ENCODE measurements at regions of chr4 and their contacts with region 1.

Region 1: GRCh38 chr4:24032371-24032989 is 142.6 kb upstream of the PPARGC1A start:
- DNase-seq: peak in 1 of 2 donors; percentile 14
- ATAC-seq: peak; percentile 68 to 96 (median 95)
- H3K4me3 ChIP-seq: no peak overlapping the region
- H3K27ac ChIP-seq: no peak overlapping the region
- H3K4me1 ChIP-seq: no peaks in the 10 kb centered on the region
- H3K27me3 ChIP-seq: no peaks in the 10 kb centered on the region
- CTCF ChIP-seq: peak; percentile 37

Region 2: DNA sequence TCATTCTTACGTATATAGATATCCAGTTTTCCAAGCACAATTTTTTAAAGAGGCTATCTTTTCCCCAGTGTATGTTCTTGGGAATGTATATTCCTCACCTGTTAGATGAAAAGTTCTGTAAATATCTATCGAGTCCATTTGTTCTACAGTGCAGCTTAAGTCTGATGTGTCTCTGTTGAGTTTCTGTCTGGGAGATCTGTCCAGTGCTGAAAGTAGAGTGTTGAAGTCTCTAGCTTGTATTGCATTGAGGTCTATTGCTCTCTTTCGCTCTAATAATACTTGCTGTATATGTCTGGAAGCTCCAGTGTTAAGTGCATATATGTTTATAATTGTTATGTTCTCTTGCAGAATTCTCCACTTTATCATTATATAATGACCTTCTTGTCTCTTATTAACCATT is 515.8 kb before region 1 on chr4:
- intact Hi-C with region 1: no loop called
- DNase-seq: no peak
- ATAC-seq: no peak
- H3K4me3 ChIP-seq: no peak overlapping the region
- H3K27ac ChIP-seq: no peak overlapping the region
- H3K4me1 ChIP-seq: no peaks in the 10 kb centered on the region
- H3K27me3 ChIP-seq: no peaks in the 10 kb centered on the region
- CTCF ChIP-seq: no peak

Region 3: GRCh38 chr4:23680671-23681518 is 351.6 kb before region 1 on chr4:
- intact Hi-C with region 1: loop called in 1 of 2 experiments (anchors 10 kb)
- DNase-seq: no peak
- ATAC-seq: no peak
- H3K4me3 ChIP-seq: no peak overlapping the region
- H3K27ac ChIP-seq: no peak overlapping the region
- H3K4me1 ChIP-seq: no peaks in the 10 kb centered on the region
- H3K27me3 ChIP-seq: no peaks in the 10 kb centered on the region
- CTCF ChIP-seq: peak; percentile 20